Activated T-helper 2 cell treated with anti-CD3 and anti-CD28 coated beads, Interferon-gamma antibody, Interleukin-2, Interleukin-4, amounts not matched to agents 10 μg/mL and 5 μg/mL and 100 μg/mL, durations not matched to agents 14 hours and 24 hours and 36 hours (primary cell): ENCODE measurements at regions of chr14 and their contacts with region 1.

Region 1: GRCh38 chr14:73613046-73613383 is 698 bp downstream of the ACOT6 start:
- DNase-seq: no peak
- H3K4me3 Mint-ChIP-seq: peak overlapping the region; percentile 79
- H3K27ac Mint-ChIP-seq: no peak overlapping the region
- H3K4me1 Mint-ChIP-seq: peaks cover 3% of the 10 kb centered on the region
- H3K27me3 Mint-ChIP-seq: peaks cover 10% of the 10 kb centered on the region

Region 2: GRCh38 chr14:73521229-73521628 is 91.8 kb before region 1 on chr14:
- intact Hi-C with region 1: no loop called
- DNase-seq: no peak
- H3K4me3 Mint-ChIP-seq: no peak overlapping the region
- H3K27ac Mint-ChIP-seq: no peak overlapping the region
- H3K4me1 Mint-ChIP-seq: no peaks in the 10 kb centered on the region
- H3K27me3 Mint-ChIP-seq: no peaks in the 10 kb centered on the region

Region 3: DNA sequence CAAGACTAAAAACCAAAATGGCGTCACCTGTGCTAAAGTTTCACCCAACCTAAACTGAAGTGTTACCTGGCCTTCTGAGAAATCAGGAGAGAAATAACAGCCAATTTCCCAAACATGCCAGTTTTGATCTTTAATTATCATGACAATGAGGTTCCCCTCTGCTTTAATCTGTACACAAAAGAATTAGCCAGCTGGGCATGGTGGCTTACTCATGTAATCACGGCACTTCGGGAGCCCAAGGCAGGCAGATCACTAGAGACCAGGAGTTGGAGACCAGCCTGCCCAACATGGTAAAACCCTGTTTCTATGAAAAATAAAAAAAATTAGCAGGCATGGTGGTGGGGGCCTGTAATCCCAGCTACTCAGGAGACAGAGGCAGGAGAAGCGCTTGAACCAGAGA is 59.2 kb before region 1 on chr14:
- intact Hi-C with region 1: no loop called
- DNase-seq: no peak
- H3K4me3 Mint-ChIP-seq: no peak overlapping the region
- H3K27ac Mint-ChIP-seq: no peak overlapping the region
- H3K4me1 Mint-ChIP-seq: no peaks in the 10 kb centered on the region
- H3K27me3 Mint-ChIP-seq: no peaks in the 10 kb centered on the region

Region 4: GRCh38 chr14:73602984-73603383 is 10.0 kb before region 1 on chr14:
- intact Hi-C with region 1: loop called (anchors 1 kb)
- DNase-seq: no peak
- H3K4me3 Mint-ChIP-seq: no peak overlapping the region
- H3K27ac Mint-ChIP-seq: no peak overlapping the region
- H3K4me1 Mint-ChIP-seq: no peaks in the 10 kb centered on the region
- H3K27me3 Mint-ChIP-seq: peaks cover 2% of the 10 kb centered on the region